Activated T-helper 2 cell treated with anti-CD3 and anti-CD28 coated beads, Interferon-gamma antibody, Interleukin-2, Interleukin-4, amounts not matched to agents 10 μg/mL and 5 μg/mL and 100 μg/mL, durations not matched to agents 14 hours and 24 hours and 36 hours (primary cell): ENCODE measurements at regions of chr3 and their contacts with region 1.

Region 1: GRCh38 chr3:23999012-23999641 is 54.0 kb downstream of the NR1D2 start:
- DNase-seq: peak; percentile 28
- H3K4me3 Mint-ChIP-seq: no peak overlapping the region
- H3K27ac Mint-ChIP-seq: no peak overlapping the region
- H3K4me1 Mint-ChIP-seq: peaks cover 4% of the 10 kb centered on the region
- H3K27me3 Mint-ChIP-seq: peaks cover 10% of the 10 kb centered on the region

Region 2: GRCh38 chr3:23344886-23345285 is 654.2 kb before region 1 on chr3:
- intact Hi-C with region 1: no loop called
- DNase-seq: no peak
- H3K4me3 Mint-ChIP-seq: no peak overlapping the region
- H3K27ac Mint-ChIP-seq: no peak overlapping the region
- H3K4me1 Mint-ChIP-seq: no peaks in the 10 kb centered on the region
- H3K27me3 Mint-ChIP-seq: no peaks in the 10 kb centered on the region

Region 3: DNA sequence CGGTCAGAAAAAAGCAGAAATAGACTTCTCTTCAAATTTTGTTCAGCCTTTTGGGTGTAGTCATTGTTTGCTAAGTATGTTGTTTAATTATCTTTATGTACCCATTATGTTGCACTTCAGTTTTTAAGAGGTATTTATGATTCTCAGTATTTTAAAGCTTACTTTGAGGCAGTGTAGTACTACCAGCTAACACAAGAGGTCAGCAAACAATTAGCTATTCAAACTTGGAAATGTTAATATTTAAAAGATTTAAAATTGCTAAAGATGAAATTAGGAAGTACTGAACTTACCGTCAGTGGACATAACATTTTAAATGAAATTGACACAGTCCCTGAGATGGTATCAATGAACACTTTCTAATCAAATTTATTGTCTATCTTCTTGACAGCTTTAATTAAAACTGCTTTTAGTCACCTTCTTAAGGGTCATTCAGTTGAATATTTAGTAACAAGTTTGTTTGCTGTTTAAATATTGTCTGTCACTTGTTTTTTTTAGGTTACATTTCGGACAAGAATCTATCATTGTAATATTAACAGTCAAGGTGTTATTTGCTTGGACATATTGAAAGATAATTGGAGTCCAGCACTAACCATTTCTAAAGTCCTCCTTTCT is 110.4 kb before region 1 on chr3:
- intact Hi-C with region 1: loop called (anchors 5 kb)
- DNase-seq: no peak
- H3K4me3 Mint-ChIP-seq: no peak overlapping the region
- H3K27ac Mint-ChIP-seq: no peak overlapping the region
- H3K4me1 Mint-ChIP-seq: no peaks in the 10 kb centered on the region
- H3K27me3 Mint-ChIP-seq: no peaks in the 10 kb centered on the region

Region 4: GRCh38 chr3:24137958-24138875 is 139.1 kb after region 1 on chr3:
- intact Hi-C with region 1: no loop called
- DNase-seq: no peak
- H3K4me3 Mint-ChIP-seq: no peak overlapping the region
- H3K27ac Mint-ChIP-seq: no peak overlapping the region
- H3K4me1 Mint-ChIP-seq: no peaks in the 10 kb centered on the region
- H3K27me3 Mint-ChIP-seq: no peaks in the 10 kb centered on the region